ENCODE measurements at regions of chr20 and their contacts with region 1.

Region 1: DNA sequence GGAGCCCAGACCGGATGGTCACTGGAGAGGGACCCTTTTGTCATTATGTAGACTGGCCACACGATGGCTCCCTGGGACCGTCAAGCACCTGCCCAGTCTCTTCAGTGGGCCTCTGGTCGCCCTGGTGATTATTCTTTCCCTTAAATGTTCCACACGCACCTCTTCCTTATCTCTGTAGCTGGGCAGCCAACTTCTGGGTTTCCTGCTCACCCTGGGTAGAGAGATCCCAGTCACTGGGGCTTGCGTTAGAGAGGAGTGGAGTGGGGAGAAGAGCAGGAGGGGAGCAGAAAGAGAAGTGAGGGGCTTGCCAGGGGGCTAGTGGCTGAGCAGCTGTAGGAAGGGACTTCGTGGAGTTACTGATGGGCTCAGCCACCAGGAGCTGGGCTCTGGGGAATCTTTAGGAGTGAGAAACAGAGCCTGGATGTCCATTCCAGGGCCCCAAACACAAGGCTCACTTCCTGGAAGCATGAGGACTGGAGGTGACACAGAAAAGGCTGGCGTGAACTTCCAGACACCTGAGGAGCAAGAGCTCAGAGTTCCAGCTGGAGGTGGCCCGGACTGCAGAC is 150.1 kb downstream of the DHX35 start:
- DNase-seq: peak; percentile 54 to 73
- H3K4me3 ChIP-seq: no peak overlapping the region
- H3K27ac ChIP-seq: no peak overlapping the region
- H3K4me1 ChIP-seq: peaks cover 1 to 14% (median 5%) of the 10 kb centered on the region in 4 experiments; a peak in 6 of 7 replicates
- H3K27me3 ChIP-seq: no peaks in the 10 kb centered on the region
- CTCF ChIP-seq: peak; percentile 76 to 86 (median 80)
- EP300 ChIP-seq: no peak
- POLR2A ChIP-seq: no peak
- RAD21 ChIP-seq: peak; percentile 96 to 97

Region 2: GRCh38 chr20:39049684-39050554 is 62.3 kb before region 1 on chr20:
- CTCF ChIA-PET with region 1: interaction called, 14 read pairs
- POLR2A ChIA-PET with region 1: interaction called, 3 read pairs
- DNase-seq: peak; percentile 59 to 96
- H3K4me3 ChIP-seq: peak overlapping the region; percentile 47 to 76 (median 64)
- H3K27ac ChIP-seq: no peak overlapping the region
- H3K4me1 ChIP-seq: peaks cover 0 to 6% (median under 1%) of the 10 kb centered on the region in 4 experiments; a peak in 3 of 7 replicates
- H3K27me3 ChIP-seq: peaks cover 0 to 10% (median 6%) of the 10 kb centered on the region in 4 experiments; a peak in 4 of 7 replicates
- CTCF ChIP-seq: peak; percentile 89 to 98 (median 94)
- EP300 ChIP-seq: no peak
- POLR2A ChIP-seq: 0 out of 3 replicates have a peak, but pooled peaks of 1 of the 2 experiments have one; percentile 41
- RAD21 ChIP-seq: peak; percentile 94 to 98

Region 3: GRCh38 chr20:39135885-39136544 is 23.8 kb after region 1 on chr20:
- CTCF ChIA-PET with region 1: interaction called, 41 read pairs
- POLR2A ChIA-PET with region 1: interaction called, 3 read pairs
- DNase-seq: no peak
- H3K4me3 ChIP-seq: no peak overlapping the region
- H3K27ac ChIP-seq: no peak overlapping the region
- H3K4me1 ChIP-seq: peaks cover 0 to 3% (median 1%) of the 10 kb centered on the region in 4 experiments; a peak in 4 of 7 replicates
- H3K27me3 ChIP-seq: no peaks in the 10 kb centered on the region
- CTCF ChIP-seq: no peak
- EP300 ChIP-seq: no peak
- POLR2A ChIP-seq: no peak
- RAD21 ChIP-seq: no peak

Region 4: GRCh38 chr20:39245685-39246311 is 133.5 kb after region 1 on chr20:
- CTCF ChIA-PET with region 1: interaction called, 15 read pairs
- POLR2A ChIA-PET with region 1: no interaction called
- DNase-seq: no peak
- H3K4me3 ChIP-seq: no peak overlapping the region
- H3K27ac ChIP-seq: no peak overlapping the region
- H3K4me1 ChIP-seq: no peaks in the 10 kb centered on the region
- H3K27me3 ChIP-seq: no peaks in the 10 kb centered on the region; a peak in 1 of 7 replicates
- CTCF ChIP-seq: no peak
- EP300 ChIP-seq: no peak
- POLR2A ChIP-seq: no peak
- RAD21 ChIP-seq: no peak

Region 5: DNA sequence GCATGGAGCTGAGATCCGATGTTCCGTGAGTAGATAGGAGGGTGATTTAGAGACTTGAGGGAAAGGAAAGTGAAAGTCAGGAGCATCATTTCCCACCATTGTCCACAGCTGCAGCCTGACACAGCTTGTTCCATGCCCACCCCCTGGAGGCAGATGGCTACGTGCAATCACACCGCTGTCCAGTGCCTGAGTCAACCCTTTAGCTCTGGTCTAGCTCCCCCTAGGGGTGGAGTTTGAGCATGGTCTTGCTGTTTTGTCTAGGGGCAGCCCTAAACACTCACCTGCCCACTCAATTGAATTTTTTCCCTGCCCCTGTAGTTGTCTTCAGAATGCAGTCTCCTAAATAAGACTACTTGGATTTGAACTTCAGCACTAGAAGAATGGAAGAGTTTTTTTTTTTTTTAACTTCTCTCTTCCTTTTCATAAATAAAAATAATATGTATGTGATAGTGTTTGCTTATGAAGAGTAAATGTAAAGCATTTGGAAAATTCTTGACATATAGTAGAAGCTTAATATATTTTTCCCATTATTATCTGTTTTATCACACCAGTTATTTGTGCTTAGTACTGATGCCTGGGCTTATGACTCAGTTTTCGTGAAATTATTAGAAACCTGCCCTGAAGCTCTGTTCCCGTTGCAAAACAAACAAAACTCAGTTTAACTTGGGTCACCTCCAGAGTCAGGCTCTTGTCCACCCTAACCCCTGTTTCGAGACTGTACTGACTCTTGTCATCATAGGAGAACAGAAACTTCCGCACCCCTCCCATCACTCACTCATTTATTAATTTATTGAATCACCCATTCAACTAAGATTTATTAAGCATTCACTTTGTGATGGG is 762.0 kb after region 1 on chr20:
- CTCF ChIA-PET with region 1: interaction called, 10 read pairs
- POLR2A ChIA-PET with region 1: no interaction called
- DNase-seq: peak; percentile 62 to 88
- H3K4me3 ChIP-seq: no peak overlapping the region
- H3K27ac ChIP-seq: no peak overlapping the region
- H3K4me1 ChIP-seq: no peaks in the 10 kb centered on the region; a peak in 1 of 7 replicates
- H3K27me3 ChIP-seq: no peaks in the 10 kb centered on the region
- CTCF ChIP-seq: peak; percentile 95 to 98 (median 96)
- EP300 ChIP-seq: no peak
- POLR2A ChIP-seq: no peak
- RAD21 ChIP-seq: peak; percentile 87 to 90